ENCODE measurements at regions of chr18 and their contacts with region 1.

Region 1: GRCh38 chr18:35374708-35375107 is 2.4 kb downstream of the ZNF396 start:
- DNase-seq: no peak
- H3K4me3 ChIP-seq: no peak overlapping the region
- H3K27me3 ChIP-seq: 0 out of 2 replicates have a peak, but pooled peaks cover 4% of the 10 kb centered on the region
- CTCF ChIP-seq: no peak

Region 2: DNA sequence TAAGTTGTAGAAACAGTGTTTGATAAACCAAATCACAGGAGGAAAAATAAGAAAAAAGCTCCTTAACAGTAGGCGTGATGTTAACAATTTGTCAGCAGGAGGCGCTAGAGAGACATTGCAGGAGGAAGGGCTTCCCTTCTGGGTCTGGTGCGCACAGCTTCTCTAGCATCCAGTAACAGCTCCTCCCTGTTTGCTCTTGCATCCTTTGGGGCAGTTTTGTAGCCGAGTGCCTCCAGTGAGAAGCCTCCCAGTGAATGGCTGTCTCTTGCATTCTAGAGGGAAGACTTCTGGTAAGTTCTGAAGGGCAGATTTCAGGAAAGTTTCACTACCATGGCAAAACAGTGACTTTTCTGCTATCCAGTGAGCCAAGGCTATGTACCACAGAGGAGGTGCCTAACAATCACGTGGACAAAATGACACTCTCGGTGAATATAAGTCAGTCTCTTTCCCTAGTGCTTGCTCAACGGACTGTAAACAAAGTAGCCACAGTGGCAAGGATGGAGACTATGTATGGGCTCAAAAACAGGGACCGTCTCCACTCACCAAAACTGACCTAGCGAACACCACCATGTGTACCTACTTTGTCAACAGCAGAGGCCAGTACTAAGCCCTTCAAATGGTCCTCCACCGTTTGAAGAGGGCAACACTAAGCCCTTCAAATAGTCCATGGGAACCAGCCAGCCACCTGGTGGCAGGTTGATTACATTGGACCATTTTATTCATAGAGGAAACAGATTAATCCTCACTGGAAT is 12.1 kb after region 1 on chr18:
- CTCF ChIA-PET with region 1: interaction called, 11 read pairs
- POLR2A ChIA-PET with region 1: no interaction called
- DNase-seq: no peak
- H3K4me3 ChIP-seq: no peak overlapping the region
- H3K27me3 ChIP-seq: peaks cover 2% of the 10 kb centered on the region; the same call in 1 of the 2 replicates
- CTCF ChIP-seq: peak; percentile 89

Region 3: GRCh38 chr18:35875566-35875965 is 500.9 kb after region 1 on chr18:
- CTCF ChIA-PET with region 1: no interaction called
- POLR2A ChIA-PET with region 1: no interaction called
- DNase-seq: no peak
- H3K4me3 ChIP-seq: no peak overlapping the region
- H3K27me3 ChIP-seq: no peaks in the 10 kb centered on the region
- CTCF ChIP-seq: no peak

Measured in BJ (cell line).